Dendritic cell treated with granulocyte-macrophage colony-stimulating factor and Interleukin-4, amounts not matched to agents 40 ng/mL and 50 ng/mL, for 4 days (primary cell): ENCODE measurements at regions of chr5 and their contacts with region 1.

Region 1: DNA sequence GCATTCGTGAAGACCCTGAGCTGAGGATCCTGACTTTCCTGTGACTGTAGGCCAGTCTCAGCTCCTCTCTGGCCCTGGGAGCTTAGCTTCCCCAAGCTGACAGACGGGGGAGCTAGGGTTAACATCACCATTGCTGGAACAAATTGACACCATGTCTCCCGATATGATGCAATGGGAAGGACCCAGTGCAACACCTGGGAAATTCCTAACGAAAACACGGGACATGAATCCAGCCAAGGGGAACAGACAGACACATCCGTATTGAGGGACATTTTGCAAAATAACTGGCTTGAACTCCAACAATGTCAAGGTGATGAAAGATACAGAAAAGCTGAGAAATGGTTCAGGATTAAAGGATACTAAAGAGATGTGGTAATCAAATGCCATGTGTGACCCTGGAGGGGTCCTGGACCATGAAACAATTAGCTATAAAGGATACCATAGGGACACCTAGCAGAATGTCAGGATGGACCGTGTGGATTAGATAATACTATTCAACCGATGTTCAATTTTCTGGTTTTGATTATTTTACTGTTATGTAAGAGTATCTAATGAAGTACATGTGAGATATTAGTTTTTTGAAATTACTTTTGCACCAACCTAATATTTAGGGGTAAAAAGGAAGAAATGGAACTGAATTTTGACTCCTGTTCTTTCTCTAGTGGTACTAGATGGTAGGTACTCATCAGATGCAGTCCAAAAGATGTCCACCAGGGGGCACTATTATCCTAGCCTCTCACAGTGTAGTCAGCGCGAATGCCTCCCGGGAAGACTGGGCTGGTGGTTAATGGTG is 52.7 kb downstream of the NDST1 start:
- H3K4me3 Mint-ChIP-seq: no peak overlapping the region
- H3K27ac Mint-ChIP-seq: no peak overlapping the region
- H3K4me1 Mint-ChIP-seq: no peaks in the 10 kb centered on the region
- H3K27me3 Mint-ChIP-seq: no peaks in the 10 kb centered on the region

Region 2: DNA sequence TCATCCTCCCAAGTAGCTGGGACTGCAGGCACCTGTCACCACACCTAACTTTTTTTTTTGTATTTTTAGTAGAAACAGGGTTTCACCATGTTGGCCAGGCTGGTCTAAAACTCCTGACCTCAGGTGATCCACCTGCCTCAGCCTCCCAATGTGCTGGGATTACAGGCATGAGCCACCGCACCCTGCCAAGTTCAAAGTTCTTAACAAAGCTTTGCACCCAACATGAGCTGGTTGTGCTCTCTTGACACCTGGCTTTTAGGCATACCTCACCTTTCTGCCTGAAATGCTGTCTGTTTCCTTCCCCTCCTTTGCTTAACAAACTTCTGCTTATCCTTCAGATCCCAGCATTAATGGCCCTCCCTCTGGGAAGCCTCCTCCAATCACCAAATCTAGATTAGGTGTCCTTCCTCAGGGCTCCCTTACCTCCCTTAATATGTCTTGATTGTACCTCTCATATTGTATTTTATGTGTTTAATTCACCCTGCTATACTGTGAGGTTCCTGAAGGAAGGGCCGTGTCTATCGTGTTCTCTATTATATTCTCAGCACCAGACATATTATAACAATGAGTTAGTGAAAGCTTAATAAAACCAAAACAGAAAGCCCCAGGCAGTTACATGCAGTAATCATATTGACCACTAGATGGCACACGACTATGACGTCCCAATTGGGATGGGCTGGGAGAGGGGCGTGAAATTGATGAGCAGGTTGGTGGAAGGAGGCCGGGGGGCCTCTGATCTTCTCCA is 893.3 kb before region 1 on chr5:
- intact Hi-C with region 1: no loop called
- H3K4me3 Mint-ChIP-seq: no peak overlapping the region
- H3K27ac Mint-ChIP-seq: peak overlapping the region; percentile 78
- H3K4me1 Mint-ChIP-seq: peaks cover 50% of the 10 kb centered on the region
- H3K27me3 Mint-ChIP-seq: no peaks in the 10 kb centered on the region

Region 3: GRCh38 chr5:150624334-150625163 is 64.0 kb after region 1 on chr5:
- intact Hi-C with region 1: no loop called
- H3K4me3 Mint-ChIP-seq: peak overlapping the region; percentile 71
- H3K27ac Mint-ChIP-seq: no peak overlapping the region
- H3K4me1 Mint-ChIP-seq: peaks cover 32% of the 10 kb centered on the region
- H3K27me3 Mint-ChIP-seq: peaks cover 42% of the 10 kb centered on the region

Region 4: GRCh38 chr5:150656191-150657132 is 95.9 kb after region 1 on chr5:
- intact Hi-C with region 1: loop called (anchors 1 kb)
- H3K4me3 Mint-ChIP-seq: peak overlapping the region; percentile 74
- H3K27ac Mint-ChIP-seq: no peak overlapping the region
- H3K4me1 Mint-ChIP-seq: peaks cover 8% of the 10 kb centered on the region
- H3K27me3 Mint-ChIP-seq: peaks cover 32% of the 10 kb centered on the region

Region 5: GRCh38 chr5:150778517-150779396 is 218.2 kb after region 1 on chr5 and contains the start of gene SMIM3:
- intact Hi-C with region 1: loop called (anchors 2 kb)
- H3K4me3 Mint-ChIP-seq: peak within 1 kb of the TSS; percentile 100
- H3K27ac Mint-ChIP-seq: peak within 1 kb of the TSS; percentile 91
- H3K4me1 Mint-ChIP-seq: peaks cover 58% of the 10 kb centered on the region
- H3K27me3 Mint-ChIP-seq: no peaks in the 10 kb centered on the region

Region 6: DNA sequence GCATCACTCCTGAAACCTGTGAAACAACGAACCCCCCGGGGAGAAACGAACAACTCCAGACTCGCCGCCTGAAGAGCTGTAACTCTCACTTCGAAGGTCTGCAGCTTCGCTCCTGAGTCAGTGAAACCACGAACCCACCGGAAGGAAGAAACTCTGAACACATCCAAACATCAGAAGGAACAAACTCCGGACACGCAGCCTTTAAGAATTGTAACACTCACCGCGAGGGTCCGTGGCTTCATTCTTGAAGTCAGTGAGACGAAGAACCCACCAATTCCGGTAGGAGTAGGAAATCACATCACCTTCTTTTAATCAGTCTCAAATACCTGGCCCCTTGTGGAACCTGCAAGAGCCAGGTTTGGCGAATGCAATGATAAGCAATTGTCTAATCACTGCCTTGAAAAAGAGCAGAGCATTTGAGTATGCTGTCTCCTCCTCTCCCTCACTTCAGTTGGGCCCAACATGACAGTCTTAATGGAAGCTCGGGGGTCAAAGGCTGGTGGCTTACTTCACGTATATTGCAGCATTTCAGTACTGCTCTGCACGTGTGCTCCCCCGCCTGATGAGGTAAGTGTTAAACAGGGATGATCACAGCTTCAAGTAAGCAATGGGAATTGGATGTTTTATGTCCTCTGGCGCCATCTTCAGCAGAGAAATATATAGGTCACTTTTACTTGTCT is 286.2 kb after region 1 on chr5:
- intact Hi-C with region 1: loop called (anchors 1 kb)
- H3K4me3 Mint-ChIP-seq: peak overlapping the region; percentile 30
- H3K27ac Mint-ChIP-seq: no peak overlapping the region
- H3K4me1 Mint-ChIP-seq: peaks cover 10% of the 10 kb centered on the region
- H3K27me3 Mint-ChIP-seq: peaks cover 5% of the 10 kb centered on the region